ENCODE measurements at regions of chr3 and their contacts with region 1.

Region 1: DNA sequence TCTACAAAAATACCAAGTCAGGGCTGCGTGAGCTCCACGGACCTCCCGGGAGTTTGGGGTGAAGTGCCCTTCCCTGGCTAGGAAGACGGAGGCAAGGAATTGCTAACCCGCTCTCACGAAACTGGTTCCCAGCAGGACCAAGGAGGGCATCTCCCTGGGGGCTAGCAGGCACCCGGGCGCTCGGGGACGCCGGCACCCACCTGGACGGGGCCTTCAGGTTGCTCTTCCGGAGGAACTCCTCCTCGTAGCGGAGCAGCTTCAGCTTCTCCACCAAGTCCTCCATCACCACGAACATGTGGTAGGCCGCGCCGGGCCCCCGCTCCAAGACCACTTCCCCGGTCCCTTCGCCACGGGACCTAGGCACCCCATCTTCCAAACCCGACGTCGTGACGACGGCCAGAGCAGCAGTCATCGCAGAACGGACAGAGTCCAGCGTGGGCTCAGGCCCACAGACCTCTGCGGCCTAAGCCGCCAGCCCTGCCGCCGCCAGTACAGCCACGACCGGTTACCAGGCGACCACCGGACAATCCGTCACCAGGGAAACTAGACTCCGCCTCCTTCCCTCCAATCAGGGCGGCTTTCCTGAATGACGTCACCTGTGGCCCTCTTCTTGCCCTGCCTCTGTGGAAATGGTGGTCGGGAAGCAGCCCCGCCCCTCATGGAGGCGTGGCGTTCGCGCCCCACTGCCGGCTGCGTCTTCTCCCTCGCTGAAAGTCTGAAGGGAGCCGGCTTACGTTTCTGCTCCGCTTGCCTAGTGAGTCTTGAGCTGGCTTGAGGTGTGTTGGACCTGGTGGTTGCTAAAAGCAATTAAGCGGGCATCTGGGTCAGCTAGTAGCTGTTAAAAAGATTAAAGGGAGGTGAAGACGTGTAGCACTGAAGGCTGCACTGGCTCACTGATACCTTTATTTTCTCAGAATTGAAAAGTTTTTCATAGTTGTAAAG is at the start of gene IFT57:
- DNase-seq: peak; percentile 94
- H3K4me3 Mint-ChIP-seq: peak within 1 kb of the TSS; percentile 87
- H3K27ac Mint-ChIP-seq: peak within 1 kb of the TSS; percentile 93
- H3K4me1 Mint-ChIP-seq: peaks cover 51% of the 10 kb centered on the region
- H3K27me3 Mint-ChIP-seq: no peaks in the 10 kb centered on the region
- total RNA-seq, gene IFT57: 27.0 and 34.9 TPM in 2 replicates

Region 2: DNA sequence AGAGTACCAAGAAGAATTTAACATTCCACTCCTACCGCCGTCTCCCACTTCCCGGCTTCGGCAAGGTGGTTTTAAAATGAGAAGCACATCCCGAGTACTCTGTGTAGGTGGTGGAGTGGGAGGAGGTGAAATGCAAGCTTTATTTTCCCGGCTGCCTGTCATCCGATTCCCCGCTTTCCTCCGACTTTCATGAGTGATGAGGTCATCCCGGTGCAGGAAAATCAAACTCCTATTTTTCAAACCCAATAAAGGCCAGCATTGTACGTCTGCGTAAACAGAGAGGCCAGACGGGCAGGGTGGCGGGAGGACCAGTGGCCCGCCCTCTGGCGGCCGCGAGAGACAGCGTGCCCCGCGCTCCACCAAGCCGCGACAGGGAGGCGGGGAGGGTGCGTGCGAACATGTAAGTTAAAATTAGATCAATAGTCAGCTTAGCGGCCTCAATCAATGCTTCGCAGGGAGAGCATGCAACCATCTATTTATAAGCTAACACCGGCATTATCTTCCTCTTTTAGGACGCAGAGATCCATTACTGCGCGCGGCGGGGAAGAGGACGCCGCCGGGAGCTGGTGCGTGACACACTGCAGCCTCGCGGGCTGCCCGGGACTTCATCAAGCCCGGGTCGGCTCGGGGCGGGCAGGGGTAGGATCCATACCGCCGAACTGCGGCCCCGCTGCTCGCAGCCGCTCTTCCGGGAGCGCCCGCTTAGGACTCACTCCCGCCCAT is 294.7 kb before region 1 on chr3:
- intact Hi-C with region 1: loop called (anchors 1 kb)
- DNase-seq: peak; percentile 50
- H3K4me3 Mint-ChIP-seq: peak overlapping the region; percentile 85
- H3K27ac Mint-ChIP-seq: no peak overlapping the region
- H3K4me1 Mint-ChIP-seq: peaks cover 9% of the 10 kb centered on the region
- H3K27me3 Mint-ChIP-seq: peaks cover 18% of the 10 kb centered on the region

Region 3: GRCh38 chr3:108124337-108125152 is 97.6 kb before region 1 on chr3:
- intact Hi-C with region 1: loop called (anchors 1 kb)
- DNase-seq: peak; percentile 67
- H3K4me3 Mint-ChIP-seq: peak overlapping the region; percentile 89
- H3K27ac Mint-ChIP-seq: peak overlapping the region; percentile 96
- H3K4me1 Mint-ChIP-seq: peaks cover 59% of the 10 kb centered on the region
- H3K27me3 Mint-ChIP-seq: peaks cover 2% of the 10 kb centered on the region

Region 4: GRCh38 chr3:108292905-108293328 is 70.7 kb after region 1 on chr3:
- intact Hi-C with region 1: loop called (anchors 1 kb)
- DNase-seq: no peak
- H3K4me3 Mint-ChIP-seq: peak overlapping the region; percentile 53
- H3K27ac Mint-ChIP-seq: peak overlapping the region; percentile 83
- H3K4me1 Mint-ChIP-seq: peaks cover 64% of the 10 kb centered on the region
- H3K27me3 Mint-ChIP-seq: peaks cover 2% of the 10 kb centered on the region

Region 5: DNA sequence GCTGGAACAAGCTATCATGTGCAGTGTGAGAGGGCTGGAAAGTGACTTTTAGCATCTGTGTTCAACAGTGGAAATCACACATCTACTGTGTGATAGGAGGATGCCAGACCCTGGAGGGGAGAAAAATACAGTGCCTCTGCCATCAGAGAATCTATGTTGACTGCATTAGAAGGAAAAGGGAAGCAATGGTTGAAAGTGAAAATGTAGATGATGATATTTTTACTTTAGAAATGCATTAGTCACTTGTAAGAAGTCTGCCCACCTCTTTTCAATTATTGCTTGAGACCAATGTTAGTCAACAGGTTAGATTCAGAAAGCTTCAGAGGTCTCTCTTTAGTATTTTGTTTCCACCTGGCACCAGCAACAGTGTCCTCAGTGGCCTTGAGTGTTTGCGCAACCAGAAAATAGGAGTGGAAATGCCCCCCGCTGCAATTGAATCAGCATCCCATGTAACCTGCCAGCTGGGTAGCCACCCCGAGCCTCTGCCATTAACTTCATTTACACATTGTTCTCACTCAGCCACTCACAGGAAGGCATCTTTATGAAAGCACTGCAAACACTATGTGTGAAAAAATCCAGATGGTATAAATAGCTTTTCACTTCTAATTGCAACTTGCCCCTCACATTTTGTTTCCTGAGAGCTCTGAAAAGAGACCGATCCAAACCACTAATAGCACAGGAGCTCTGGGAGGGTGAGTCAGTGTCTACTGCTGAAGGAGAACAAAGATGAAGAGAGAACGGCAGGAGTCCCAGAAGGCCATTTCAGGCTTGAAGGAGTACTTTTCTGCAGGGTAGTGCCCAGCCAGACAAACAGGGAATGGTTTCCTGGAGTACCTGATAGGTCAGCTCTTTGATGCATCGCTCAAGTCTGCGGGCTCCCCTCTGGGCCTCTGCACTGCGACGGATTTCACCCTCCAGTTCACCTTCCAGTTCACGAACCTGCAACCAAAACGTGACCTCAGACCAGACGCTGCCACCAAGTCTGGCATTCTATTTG is 166.3 kb after region 1 on chr3:
- intact Hi-C with region 1: loop called (anchors 1 kb)
- DNase-seq: no peak
- H3K4me3 Mint-ChIP-seq: no peak overlapping the region
- H3K27ac Mint-ChIP-seq: peak overlapping the region; percentile 50
- H3K4me1 Mint-ChIP-seq: peaks cover 24% of the 10 kb centered on the region
- H3K27me3 Mint-ChIP-seq: peaks cover 7% of the 10 kb centered on the region

Region 6: DNA sequence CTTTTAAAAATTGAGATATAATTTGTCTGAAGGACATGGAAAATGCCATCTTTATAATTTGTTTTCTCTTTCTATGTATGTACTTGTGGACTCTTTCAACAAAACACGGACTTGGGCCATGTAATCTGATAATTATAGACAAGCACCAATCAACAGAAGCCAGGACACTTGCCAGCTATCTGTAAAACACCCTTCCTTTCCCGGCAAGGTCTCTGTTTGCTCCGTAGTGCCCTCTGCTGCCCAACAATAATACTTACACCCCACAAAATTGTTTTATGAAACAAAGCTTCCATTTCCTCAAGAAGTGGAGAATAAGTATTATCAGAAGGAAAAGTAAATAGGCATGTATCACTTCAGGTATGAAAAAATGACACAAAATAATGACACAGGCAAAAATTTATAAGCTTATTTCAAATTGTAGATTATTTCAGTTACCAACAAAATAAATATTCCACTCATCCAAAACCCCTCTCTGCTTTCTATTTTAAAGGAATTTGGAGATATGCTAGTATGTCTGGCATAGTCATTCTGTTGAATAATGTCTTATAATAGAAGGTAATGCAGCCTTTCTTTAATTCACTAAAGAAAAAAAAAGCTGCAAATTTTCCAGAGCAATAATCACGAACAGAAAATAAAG is 255.4 kb after region 1 on chr3:
- intact Hi-C with region 1: loop called (anchors 1 kb)
- DNase-seq: peak; percentile 50
- H3K4me3 Mint-ChIP-seq: no peak overlapping the region
- H3K27ac Mint-ChIP-seq: no peak overlapping the region
- H3K4me1 Mint-ChIP-seq: no peaks in the 10 kb centered on the region
- H3K27me3 Mint-ChIP-seq: peaks cover 13% of the 10 kb centered on the region

Measured in activated T-helper 1 cell treated with anti-CD3 and anti-CD28 coated beads, Interleukin-12 subunit alpha, Interleukin-12 subunit beta, Interleukin-2, Interleukin-4 antibody, amounts not matched to agents 30 ng/mL and 10 ng/mL and 1 ng/mL, durations not matched to agents 14 hours and 24 hours and 36 hours (primary cell).